Gastrocnemius medialis (tissue), 4 donors: ENCODE measurements at regions of chr16 and their contacts with region 1.

Region 1: GRCh38 chr16:56700195-56700594 is 17.9 kb downstream of the MT1X start:
- DNase-seq: no peak
- ATAC-seq: no peak
- H3K4me3 ChIP-seq: no peak overlapping the region
- H3K27ac ChIP-seq: no peak overlapping the region
- H3K4me1 ChIP-seq: peaks cover 0 to 2% of the 10 kb centered on the region in 2 donors
- H3K27me3 ChIP-seq: no peaks in the 10 kb centered on the region
- CTCF ChIP-seq: no peak
- POLR2A ChIP-seq: no peak

Region 2: DNA sequence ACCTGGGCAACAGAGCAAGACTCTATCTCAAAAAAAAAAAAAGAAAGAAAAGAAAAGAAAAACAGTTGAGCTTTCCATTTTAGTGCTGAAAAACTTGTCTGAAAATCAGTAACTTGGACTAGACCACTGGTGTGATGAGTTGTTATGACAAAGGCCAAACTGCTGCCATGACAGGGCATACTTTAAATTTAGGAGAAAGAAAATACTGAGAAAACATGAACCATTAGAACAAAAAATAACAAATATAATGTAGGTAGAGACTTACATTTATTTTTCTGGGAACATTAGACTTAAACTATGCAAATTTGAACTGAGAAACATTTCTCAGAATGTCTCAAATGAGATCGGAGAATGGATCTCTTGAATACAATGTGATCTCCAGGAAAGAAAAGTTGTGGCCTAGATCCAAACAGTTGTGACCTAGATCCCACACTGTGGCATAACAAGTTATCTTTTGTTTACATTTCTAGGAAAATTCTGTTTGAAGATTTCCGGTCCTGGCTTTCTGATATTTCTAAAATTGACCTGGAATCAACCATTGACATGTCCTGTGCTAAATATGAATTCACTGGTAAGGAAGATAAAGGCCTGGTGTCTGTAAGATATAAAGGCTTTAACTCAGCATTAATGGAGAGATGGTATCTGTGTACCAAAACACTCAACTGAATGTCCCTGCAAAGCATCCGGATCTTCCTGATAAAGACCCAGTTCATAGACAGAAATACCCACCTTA is 238.0 kb before region 1 on chr16:
- in situ Hi-C with region 1: no loop called
- intact Hi-C with region 1: no loop called
- DNase-seq: no peak
- ATAC-seq: no peak
- H3K4me3 ChIP-seq: no peak overlapping the region
- H3K27ac ChIP-seq: peak overlapping the region in 1 of 4 donors; percentile 11
- H3K4me1 ChIP-seq: no peaks in the 10 kb centered on the region
- H3K27me3 ChIP-seq: no peaks in the 10 kb centered on the region
- CTCF ChIP-seq: no peak
- POLR2A ChIP-seq: no peak

Region 3: GRCh38 chr16:56513972-56514371 is 186.2 kb before region 1 on chr16:
- in situ Hi-C with region 1: loop called in 2 of 4 experiments (anchors 5 to 10 kb)
- intact Hi-C with region 1: loop called (anchors 1 kb)
- DNase-seq: peak in 1 of 2 donors; percentile 41
- ATAC-seq: peak; percentile 74 to 75
- H3K4me3 ChIP-seq: no peak overlapping the region
- H3K27ac ChIP-seq: peak overlapping the region in 2 of 4 donors; percentile 14 to 16
- H3K4me1 ChIP-seq: peaks cover 44 to 63% of the 10 kb centered on the region in 2 donors
- H3K27me3 ChIP-seq: no peaks in the 10 kb centered on the region
- CTCF ChIP-seq: peak; percentile 37 to 69 (median 51)
- POLR2A ChIP-seq: no peak

Region 4: DNA sequence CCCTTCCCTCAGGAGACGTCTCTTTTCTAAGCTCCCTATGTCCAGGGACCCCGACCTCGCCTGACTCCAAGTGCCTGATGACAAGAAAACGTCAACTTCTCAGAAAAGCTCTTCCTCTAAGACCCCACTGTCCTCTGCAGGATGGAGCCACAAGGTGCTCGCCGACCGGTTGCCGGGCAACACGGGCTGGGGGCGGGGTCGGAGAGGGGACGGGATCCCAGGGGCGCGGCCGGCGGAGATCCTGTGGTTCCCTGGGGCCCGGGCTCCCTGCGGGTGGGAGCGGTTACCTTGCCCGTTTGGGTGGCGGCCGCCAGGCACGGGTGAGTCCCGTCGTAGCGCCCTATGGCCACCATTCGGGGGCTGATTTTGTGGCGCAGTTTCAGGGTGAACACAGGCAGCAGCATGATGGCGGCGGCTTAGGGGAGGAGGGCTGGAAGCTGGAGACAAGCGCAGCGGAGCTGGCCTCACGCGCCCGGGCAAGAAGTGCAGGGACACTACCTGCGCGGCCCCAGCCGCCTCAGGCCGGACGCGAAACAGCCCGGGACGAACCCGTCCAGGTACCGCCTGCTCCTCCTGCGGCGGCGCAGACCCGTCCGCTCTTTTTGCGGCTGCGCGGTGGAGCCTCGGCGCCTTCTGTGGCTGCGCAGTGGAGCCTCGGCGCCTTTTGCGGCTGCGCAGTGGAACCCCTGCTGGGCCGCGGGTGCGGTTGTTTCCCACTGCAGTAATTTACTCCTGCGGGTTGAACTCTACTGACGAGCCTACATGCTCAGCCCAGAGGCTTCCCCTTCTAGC is 180.5 kb before region 1 on chr16 and contains the start of gene BBS2:
- in situ Hi-C with region 1: loop called in 2 of 4 experiments (anchors 5 to 10 kb)
- intact Hi-C with region 1: loop called (anchors 1 kb)
- DNase-seq: peak; percentile 79 to 85
- ATAC-seq: peak; percentile 88 to 90
- H3K4me3 ChIP-seq: peak within 1 kb of the TSS; percentile 90 to 99 (median 96)
- H3K27ac ChIP-seq: peak within 1 kb of the TSS; percentile 90 to 92 (median 91)
- H3K4me1 ChIP-seq: peaks cover 33 to 41% of the 10 kb centered on the region in 2 donors
- H3K27me3 ChIP-seq: no peaks in the 10 kb centered on the region
- CTCF ChIP-seq: peak in 1 of 5 experiments; percentile 12
- POLR2A ChIP-seq: peak; percentile 82 to 85
- total RNA-seq, gene BBS2: 25.2 to 52.0 (median 28.6) TPM

Region 5: GRCh38 chr16:56576585-56577293 is 123.5 kb before region 1 on chr16:
- in situ Hi-C with region 1: loop called in 1 of 4 experiments (anchors 10 kb)
- intact Hi-C with region 1: loop called (anchors 1 kb)
- DNase-seq: peak; percentile 38 to 62
- ATAC-seq: peak; percentile 63 to 95
- H3K4me3 ChIP-seq: no peak overlapping the region
- H3K27ac ChIP-seq: no peak overlapping the region
- H3K4me1 ChIP-seq: no peaks in the 10 kb centered on the region
- H3K27me3 ChIP-seq: no peaks in the 10 kb centered on the region
- CTCF ChIP-seq: peak; percentile 66 to 78 (median 71)
- POLR2A ChIP-seq: no peak

Region 6: GRCh38 chr16:56600398-56600999 is 99.7 kb before region 1 on chr16:
- in situ Hi-C with region 1: loop called in 2 of 4 experiments (anchors 5 to 10 kb)
- intact Hi-C with region 1: loop called (anchors 1 kb)
- DNase-seq: no peak
- ATAC-seq: no peak
- H3K4me3 ChIP-seq: no peak overlapping the region
- H3K27ac ChIP-seq: no peak overlapping the region
- H3K4me1 ChIP-seq: peaks cover 17 to 20% of the 10 kb centered on the region in 2 donors
- H3K27me3 ChIP-seq: no peaks in the 10 kb centered on the region
- CTCF ChIP-seq: peak; percentile 25 to 55 (median 46)
- POLR2A ChIP-seq: no peak

Region 7: GRCh38 chr16:56625140-56625942 is 74.9 kb before region 1 on chr16 and contains the start of gene MT1E:
- in situ Hi-C with region 1: no loop called
- intact Hi-C with region 1: loop called (anchors 2 kb)
- DNase-seq: peak; percentile 43 to 83
- ATAC-seq: peak; percentile 77 to 80
- H3K4me3 ChIP-seq: peak within 1 kb of the TSS; percentile 66 to 84 (median 74)
- H3K27ac ChIP-seq: peak within 1 kb of the TSS; percentile 88 to 96 (median 92)
- H3K4me1 ChIP-seq: peaks cover 18 to 23% of the 10 kb centered on the region in 2 donors
- H3K27me3 ChIP-seq: no peaks in the 10 kb centered on the region
- CTCF ChIP-seq: no peak
- POLR2A ChIP-seq: peak; percentile 88 to 91
- total RNA-seq, gene MT1E: 63.0 to 434 (median 267) TPM

Region 8: DNA sequence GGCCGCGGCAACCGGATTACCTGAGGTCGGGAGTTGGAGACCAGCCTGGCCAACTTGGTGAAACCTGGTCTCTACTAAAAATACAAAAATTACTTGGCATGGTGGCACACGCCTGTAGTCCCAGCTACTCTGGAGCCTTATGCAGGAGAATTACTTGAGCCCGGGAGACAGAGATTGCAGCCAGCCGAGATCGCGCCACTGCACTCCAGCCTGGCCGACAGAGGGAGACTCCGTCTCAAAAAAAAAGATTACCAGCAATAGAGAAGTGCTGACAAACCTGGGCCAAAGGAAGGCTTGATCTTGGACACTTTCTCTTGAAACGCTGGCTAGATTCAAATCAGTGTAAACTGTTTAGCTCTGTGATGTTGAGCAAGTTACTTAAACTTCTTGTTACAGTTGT is 26.3 kb before region 1 on chr16:
- in situ Hi-C with region 1: loop called in 2 of 4 experiments (anchors 5 kb)
- intact Hi-C with region 1: loop called (anchors 1 kb)
- DNase-seq: peak in 1 of 2 donors; percentile 54
- ATAC-seq: peak; percentile 77 to 90
- H3K4me3 ChIP-seq: no peak overlapping the region
- H3K27ac ChIP-seq: no peak overlapping the region
- H3K4me1 ChIP-seq: peaks cover under 1 to 7% of the 10 kb centered on the region in 2 donors
- H3K27me3 ChIP-seq: peaks cover 12 to 33% (median 20%) of the 10 kb centered on the region in 3 donors
- CTCF ChIP-seq: peak; percentile 68 to 83 (median 80)
- POLR2A ChIP-seq: no peak

Region 9: DNA sequence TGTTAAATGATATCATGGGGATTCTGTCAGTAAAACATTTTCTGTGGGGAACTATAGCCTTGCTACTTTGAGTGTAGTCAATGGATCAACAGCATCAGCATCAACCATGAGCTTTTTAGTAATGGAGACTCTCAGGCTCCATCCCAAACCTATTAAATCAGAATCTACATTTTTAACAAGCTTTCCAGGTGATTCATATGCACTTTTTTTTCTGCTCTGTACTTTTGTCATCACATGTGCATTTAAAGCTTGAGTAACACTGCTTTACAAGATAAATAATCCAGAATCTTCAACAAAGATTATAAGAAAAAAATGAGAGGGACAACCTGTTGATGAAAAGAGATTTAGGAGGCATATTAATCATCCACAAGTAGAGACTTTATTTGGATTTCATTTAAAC is 53.2 kb after region 1 on chr16:
- in situ Hi-C with region 1: no loop called
- intact Hi-C with region 1: no loop called
- DNase-seq: no peak
- ATAC-seq: no peak
- H3K4me3 ChIP-seq: no peak overlapping the region
- H3K27ac ChIP-seq: no peak overlapping the region
- H3K4me1 ChIP-seq: no peaks in the 10 kb centered on the region
- H3K27me3 ChIP-seq: no peaks in the 10 kb centered on the region
- CTCF ChIP-seq: no peak
- POLR2A ChIP-seq: no peak

Region 10: GRCh38 chr16:56841233-56841632 is 141.0 kb after region 1 on chr16:
- in situ Hi-C with region 1: no loop called
- intact Hi-C with region 1: no loop called
- DNase-seq: no peak
- ATAC-seq: no peak
- H3K4me3 ChIP-seq: no peak overlapping the region
- H3K27ac ChIP-seq: no peak overlapping the region
- H3K4me1 ChIP-seq: no peaks in the 10 kb centered on the region
- H3K27me3 ChIP-seq: no peaks in the 10 kb centered on the region
- CTCF ChIP-seq: no peak
- POLR2A ChIP-seq: no peak